Activated CD8-positive, alpha-beta T cell treated with anti-CD3 and anti-CD28 coated beads for 36 hours (primary cell): ENCODE measurements at regions of chr14 and their contacts with region 1.

Region 1: GRCh38 chr14:93115069-93115820 is 480 bp downstream of the ITPK1 start:
- DNase-seq: peak; percentile 84
- ATAC-seq: peak; percentile 71
- H3K4me3 Mint-ChIP-seq: peak overlapping the region; percentile 77
- H3K27ac Mint-ChIP-seq: peak overlapping the region; percentile 67
- H3K4me1 Mint-ChIP-seq: peaks cover 28% of the 10 kb centered on the region
- H3K27me3 Mint-ChIP-seq: no peaks in the 10 kb centered on the region
- CTCF ChIP-seq: no peak

Region 2: DNA sequence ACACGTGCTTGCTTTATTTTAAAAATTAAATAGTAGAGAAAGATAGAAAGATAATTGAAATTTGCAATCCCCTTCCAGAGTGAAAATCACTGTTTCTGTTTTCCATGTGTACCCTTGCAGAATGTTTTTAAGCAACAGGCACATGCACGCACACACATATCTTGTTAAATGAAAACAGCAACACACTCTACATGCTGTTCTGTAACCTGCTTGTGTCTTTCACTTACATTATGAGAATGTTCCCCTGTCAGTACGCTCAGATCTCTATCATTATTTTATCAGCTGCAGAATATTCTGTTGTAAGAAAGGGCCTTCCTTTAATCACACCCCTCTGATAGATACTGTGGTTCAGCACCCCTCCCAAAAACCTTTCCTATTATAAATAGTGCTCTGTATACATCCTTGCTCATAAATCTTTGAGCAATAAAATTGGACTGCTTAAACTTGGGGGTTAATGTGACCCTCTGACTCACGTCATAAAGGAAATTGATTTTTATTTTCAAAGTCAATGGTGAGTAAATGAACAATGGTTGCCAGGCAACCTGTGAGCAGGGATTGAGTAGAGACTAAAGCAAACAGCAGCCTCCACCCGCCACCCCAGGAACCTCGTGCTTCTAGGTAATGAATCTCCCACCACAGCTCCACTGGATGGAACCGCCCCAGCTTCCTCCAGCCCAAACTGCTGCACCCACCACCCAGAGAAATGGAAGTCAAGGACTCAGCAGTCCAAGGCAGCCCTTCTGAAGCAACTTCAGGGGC is 224.2 kb before region 1 on chr14:
- CTCF ChIA-PET with region 1: no interaction called
- POLR2A ChIA-PET with region 1: no interaction called
- intact Hi-C with region 1: no loop called
- DNase-seq: peak; percentile 14
- ATAC-seq: peak; percentile 27
- H3K4me3 Mint-ChIP-seq: no peak overlapping the region
- H3K27ac Mint-ChIP-seq: no peak overlapping the region
- H3K4me1 Mint-ChIP-seq: peaks cover 8% of the 10 kb centered on the region
- H3K27me3 Mint-ChIP-seq: peaks cover 12% of the 10 kb centered on the region
- CTCF ChIP-seq: no peak

Region 3: GRCh38 chr14:93033983-93034670 is 81.1 kb before region 1 on chr14:
- CTCF ChIA-PET with region 1: interaction called, 39 read pairs
- POLR2A ChIA-PET with region 1: no interaction called
- intact Hi-C with region 1: no loop called
- DNase-seq: peak; percentile 75
- ATAC-seq: peak; percentile 94
- H3K4me3 Mint-ChIP-seq: peak overlapping the region; percentile 18
- H3K27ac Mint-ChIP-seq: peak overlapping the region; percentile 87
- H3K4me1 Mint-ChIP-seq: peaks cover 55% of the 10 kb centered on the region
- H3K27me3 Mint-ChIP-seq: no peaks in the 10 kb centered on the region
- CTCF ChIP-seq: peak; percentile 76

Region 4: DNA sequence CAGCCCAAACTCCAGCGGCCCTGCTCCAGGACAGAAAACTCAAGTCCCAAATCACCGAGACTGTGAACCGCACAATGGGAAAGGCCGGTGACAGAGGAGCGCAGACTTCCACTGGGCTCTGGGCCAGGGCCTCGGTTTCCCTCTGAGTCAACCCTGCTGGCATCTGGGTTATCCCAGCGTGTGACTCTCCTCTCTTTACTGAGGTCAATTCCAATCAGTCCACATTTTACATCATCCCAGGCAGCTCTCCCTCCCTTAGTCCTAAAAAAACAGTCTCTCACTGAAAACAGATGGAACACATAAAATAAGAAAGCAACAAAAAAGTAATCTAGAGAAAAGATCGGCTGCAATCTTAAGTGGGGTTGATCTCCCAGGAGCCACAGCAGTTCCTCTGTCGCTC is 36.4 kb before region 1 on chr14:
- CTCF ChIA-PET with region 1: interaction called, 45 read pairs
- POLR2A ChIA-PET with region 1: interaction called, 5 read pairs
- intact Hi-C with region 1: no loop called
- DNase-seq: no peak
- ATAC-seq: no peak
- H3K4me3 Mint-ChIP-seq: no peak overlapping the region
- H3K27ac Mint-ChIP-seq: peak overlapping the region; percentile 37
- H3K4me1 Mint-ChIP-seq: peaks cover 76% of the 10 kb centered on the region
- H3K27me3 Mint-ChIP-seq: no peaks in the 10 kb centered on the region
- CTCF ChIP-seq: no peak

Region 5: DNA sequence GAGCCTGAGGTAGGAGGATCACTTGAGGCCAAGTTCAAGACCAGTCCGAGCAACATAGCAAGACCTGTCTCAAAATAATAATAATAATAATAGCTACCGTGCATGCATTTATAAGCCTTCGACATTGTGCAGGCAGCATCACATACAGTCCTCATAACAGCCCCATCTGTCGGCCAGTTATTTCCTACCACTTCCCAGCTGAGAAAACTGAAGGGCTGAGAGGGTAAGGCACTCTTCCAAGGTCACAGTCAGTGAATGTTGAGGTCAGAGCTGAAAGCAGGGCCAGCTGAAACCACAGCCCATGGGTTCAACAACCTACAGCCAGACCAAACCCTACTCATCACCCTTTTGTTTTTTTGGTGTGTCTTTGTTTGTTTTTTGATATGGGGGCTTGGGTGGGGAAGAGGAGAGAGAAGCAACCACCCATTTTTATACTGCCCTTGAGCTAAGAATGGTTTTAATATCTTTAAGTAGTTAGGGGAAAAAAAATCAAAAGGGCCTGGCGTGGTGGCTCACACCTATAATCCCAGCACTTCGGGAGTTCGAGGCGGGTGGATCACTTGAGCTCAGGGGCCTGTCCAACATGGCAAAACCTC is 17.3 kb after region 1 on chr14:
- CTCF ChIA-PET with region 1: interaction called, 180 read pairs
- POLR2A ChIA-PET with region 1: interaction called, 4 read pairs
- intact Hi-C with region 1: no loop called
- DNase-seq: peak; percentile 57
- ATAC-seq: peak; percentile 56
- H3K4me3 Mint-ChIP-seq: no peak overlapping the region
- H3K27ac Mint-ChIP-seq: no peak overlapping the region
- H3K4me1 Mint-ChIP-seq: no peaks in the 10 kb centered on the region
- H3K27me3 Mint-ChIP-seq: no peaks in the 10 kb centered on the region
- CTCF ChIP-seq: peak; percentile 47

Region 6: DNA sequence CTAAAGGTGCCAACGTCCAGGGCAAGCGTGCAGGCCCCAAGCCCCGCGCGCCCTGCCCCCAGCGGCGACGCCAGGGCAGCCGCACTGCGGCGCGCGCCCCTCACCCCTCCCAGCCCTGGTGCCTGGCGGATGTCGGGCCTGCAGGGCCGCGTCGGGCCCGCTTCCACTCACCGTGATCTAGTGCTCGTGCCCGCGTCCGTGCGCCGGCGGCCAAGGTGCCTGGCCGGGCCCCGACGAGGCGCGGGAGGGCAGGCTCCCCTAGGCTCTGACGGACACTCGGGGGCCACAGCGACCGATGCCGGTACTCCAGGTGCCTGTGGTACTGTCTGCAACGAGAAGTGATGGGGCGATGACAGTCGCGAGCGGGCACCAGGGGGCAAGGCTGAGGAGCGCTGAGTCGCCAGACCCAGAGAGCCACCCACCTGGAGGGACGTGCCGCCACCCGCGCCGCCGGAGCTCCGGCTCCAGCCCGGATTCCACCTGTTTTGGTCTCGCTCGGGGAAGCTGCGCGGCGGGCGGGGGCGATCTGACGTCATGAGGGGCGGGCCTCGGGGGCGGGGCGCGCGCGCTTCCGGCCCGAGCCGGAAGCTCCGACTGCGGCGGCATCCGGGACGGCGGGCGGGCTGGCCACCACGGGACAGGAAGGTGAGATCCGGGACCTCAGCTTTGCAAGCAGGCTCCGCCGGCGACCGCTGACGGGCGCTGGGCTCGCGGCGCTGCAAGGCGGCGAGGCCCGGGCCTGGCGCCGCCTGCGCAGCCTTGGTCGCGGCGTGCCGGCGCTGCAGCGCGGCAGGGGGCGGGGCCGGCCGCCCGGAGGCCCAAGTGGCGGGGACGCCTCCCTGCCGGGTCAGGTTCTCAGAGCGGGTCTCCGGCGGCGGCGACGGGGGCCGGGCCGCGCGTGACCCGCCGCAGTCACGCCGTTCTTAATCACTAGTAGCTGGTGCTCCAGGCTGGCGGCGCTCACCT is 69.4 kb after region 1 on chr14 and contains the starts of genes LYSET and MOAP1:
- CTCF ChIA-PET with region 1: interaction called, 25 read pairs
- POLR2A ChIA-PET with region 1: no interaction called
- intact Hi-C with region 1: no loop called
- DNase-seq: peak; percentile 92
- ATAC-seq: peak; percentile 89
- H3K4me3 Mint-ChIP-seq: peak within 1 kb of the TSS; percentile 97
- H3K27ac Mint-ChIP-seq: peak within 1 kb of the TSS; percentile 91
- H3K4me1 Mint-ChIP-seq: peaks cover 43% of the 10 kb centered on the region
- H3K27me3 Mint-ChIP-seq: no peaks in the 10 kb centered on the region
- CTCF ChIP-seq: peak; percentile 11
- total RNA-seq, gene LYSET: 13.6 to 15.5 TPM
- total RNA-seq, gene MOAP1: 19.1 to 19.6 TPM

Region 7: DNA sequence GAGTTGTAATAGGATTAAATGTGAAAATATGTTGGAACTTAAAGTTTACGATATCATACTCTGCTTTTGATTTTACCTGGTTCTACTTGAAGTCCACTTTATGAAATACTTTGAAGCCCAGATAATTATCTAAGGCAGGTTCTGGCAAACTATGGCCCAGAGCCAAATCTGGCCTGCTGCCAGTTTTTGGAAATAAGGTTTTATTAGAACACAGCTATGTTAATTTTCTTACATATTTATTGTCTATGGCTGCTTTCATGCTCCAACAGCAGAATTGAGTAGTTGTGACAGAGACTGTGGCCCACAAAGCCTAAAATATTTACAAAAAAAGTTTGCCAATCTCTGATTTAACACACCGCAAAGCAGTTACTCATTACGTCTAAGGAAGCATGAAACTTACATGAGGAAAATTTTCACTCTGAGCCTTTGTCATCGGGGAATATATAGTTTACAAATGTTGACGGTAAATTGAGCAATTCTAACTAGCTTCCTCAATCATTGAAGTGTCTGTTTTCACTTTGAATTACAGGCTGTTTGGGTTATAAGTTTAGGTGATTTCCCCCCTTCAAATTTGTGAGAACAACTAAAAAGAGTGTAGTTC is 411.9 kb after region 1 on chr14:
- CTCF ChIA-PET with region 1: no interaction called
- POLR2A ChIA-PET with region 1: no interaction called
- intact Hi-C with region 1: no loop called
- DNase-seq: no peak
- ATAC-seq: no peak
- H3K4me3 Mint-ChIP-seq: no peak overlapping the region
- H3K27ac Mint-ChIP-seq: no peak overlapping the region
- H3K4me1 Mint-ChIP-seq: no peaks in the 10 kb centered on the region
- H3K27me3 Mint-ChIP-seq: peaks cover 11% of the 10 kb centered on the region
- CTCF ChIP-seq: no peak

Region 8: GRCh38 chr14:93759719-93760307 is 644.6 kb after region 1 on chr14:
- CTCF ChIA-PET with region 1: no interaction called
- POLR2A ChIA-PET with region 1: no interaction called
- intact Hi-C with region 1: no loop called
- DNase-seq: no peak
- ATAC-seq: no peak
- H3K4me3 Mint-ChIP-seq: no peak overlapping the region
- H3K27ac Mint-ChIP-seq: no peak overlapping the region
- H3K4me1 Mint-ChIP-seq: no peaks in the 10 kb centered on the region
- H3K27me3 Mint-ChIP-seq: peaks cover 4% of the 10 kb centered on the region
- CTCF ChIP-seq: no peak